ENCODE measurements at regions of chr13 and their contacts with region 1.

Region 1: DNA sequence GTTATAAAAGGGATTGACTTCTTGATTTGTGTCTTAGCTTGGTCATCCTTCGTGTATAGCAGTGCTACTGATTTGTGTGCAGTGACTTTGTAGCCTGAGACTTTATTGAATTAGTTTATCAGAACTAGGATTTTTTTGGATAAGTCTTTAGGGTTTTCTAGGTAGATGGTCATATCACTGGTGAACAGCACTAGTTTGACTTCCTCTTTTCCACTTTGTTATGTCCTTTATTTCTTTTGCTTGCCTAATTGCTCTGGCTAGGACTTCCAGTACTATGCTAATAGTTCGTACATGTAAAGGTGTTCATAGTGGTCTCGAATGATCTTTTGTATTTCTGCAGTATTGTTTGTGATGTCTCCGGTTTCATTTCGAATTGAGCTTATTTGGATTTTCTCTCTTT is 145.4 kb downstream of the DNAJC3 start:
- DNase-seq: no peak
- ATAC-seq: no peak
- H3K4me3 ChIP-seq: no peak overlapping the region
- H3K27ac ChIP-seq: no peak overlapping the region
- H3K4me1 ChIP-seq: no peaks in the 10 kb centered on the region
- H3K27me3 ChIP-seq: no peaks in the 10 kb centered on the region
- CTCF ChIP-seq: no peak
- POLR2A ChIP-seq: no peak

Region 2: GRCh38 chr13:95579303-95579702 is 243.0 kb before region 1 on chr13:
- intact Hi-C with region 1: no loop called
- DNase-seq: no peak
- ATAC-seq: no peak
- H3K4me3 ChIP-seq: no peak overlapping the region
- H3K27ac ChIP-seq: no peak overlapping the region
- H3K4me1 ChIP-seq: no peaks in the 10 kb centered on the region
- H3K27me3 ChIP-seq: no peaks in the 10 kb centered on the region
- CTCF ChIP-seq: no peak
- POLR2A ChIP-seq: no peak

Region 3: DNA sequence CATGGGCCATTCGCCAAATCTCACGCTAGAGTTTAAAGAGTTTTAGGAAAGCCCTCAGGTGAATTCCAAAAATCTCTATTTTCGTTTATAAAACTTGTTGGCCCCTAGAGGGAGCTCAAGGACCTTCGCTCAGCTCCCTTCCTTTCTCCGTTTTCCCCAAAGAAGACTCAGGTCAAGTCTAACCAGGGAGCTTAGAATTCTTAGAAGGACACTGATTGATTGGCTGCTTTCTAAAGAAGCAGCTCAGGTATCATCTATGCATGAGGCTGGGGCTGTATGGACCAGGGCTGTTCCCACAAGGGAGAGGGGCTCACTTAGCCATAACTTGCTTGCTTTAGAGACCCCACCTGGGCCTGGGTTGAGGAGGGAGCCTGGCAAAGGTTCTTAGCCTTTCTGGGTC is 198.3 kb before region 1 on chr13:
- intact Hi-C with region 1: loop called in 1 of 2 experiments (anchors 10 kb)
- DNase-seq: no peak
- ATAC-seq: peak; percentile 79 to 86 (median 83)
- H3K4me3 ChIP-seq: no peak overlapping the region
- H3K27ac ChIP-seq: no peak overlapping the region
- H3K4me1 ChIP-seq: no peaks in the 10 kb centered on the region
- H3K27me3 ChIP-seq: no peaks in the 10 kb centered on the region
- CTCF ChIP-seq: peak; percentile 60 to 72 (median 70)
- POLR2A ChIP-seq: no peak

Region 4: DNA sequence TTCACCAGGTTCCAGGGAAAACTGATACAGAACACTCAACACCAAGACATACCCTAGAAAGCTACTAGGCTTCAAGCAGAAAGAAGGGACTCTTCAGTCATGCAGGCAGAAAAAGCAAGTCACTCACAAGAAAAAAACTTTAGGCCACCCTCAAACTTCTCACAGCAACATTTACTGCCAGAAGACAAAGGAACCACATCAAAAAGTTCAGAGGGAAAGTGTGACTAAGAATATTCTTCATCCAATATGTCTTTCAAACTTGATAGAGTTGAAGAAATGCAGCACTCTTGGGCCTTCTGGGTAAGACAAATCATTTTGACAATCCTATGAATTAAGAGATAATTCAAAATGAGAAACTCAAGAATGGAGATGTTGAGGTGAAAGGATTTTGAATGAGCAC is 185.4 kb before region 1 on chr13:
- intact Hi-C with region 1: no loop called
- DNase-seq: no peak
- ATAC-seq: no peak
- H3K4me3 ChIP-seq: no peak overlapping the region
- H3K27ac ChIP-seq: no peak overlapping the region
- H3K4me1 ChIP-seq: no peaks in the 10 kb centered on the region
- H3K27me3 ChIP-seq: no peaks in the 10 kb centered on the region
- CTCF ChIP-seq: no peak
- POLR2A ChIP-seq: no peak

Region 5: DNA sequence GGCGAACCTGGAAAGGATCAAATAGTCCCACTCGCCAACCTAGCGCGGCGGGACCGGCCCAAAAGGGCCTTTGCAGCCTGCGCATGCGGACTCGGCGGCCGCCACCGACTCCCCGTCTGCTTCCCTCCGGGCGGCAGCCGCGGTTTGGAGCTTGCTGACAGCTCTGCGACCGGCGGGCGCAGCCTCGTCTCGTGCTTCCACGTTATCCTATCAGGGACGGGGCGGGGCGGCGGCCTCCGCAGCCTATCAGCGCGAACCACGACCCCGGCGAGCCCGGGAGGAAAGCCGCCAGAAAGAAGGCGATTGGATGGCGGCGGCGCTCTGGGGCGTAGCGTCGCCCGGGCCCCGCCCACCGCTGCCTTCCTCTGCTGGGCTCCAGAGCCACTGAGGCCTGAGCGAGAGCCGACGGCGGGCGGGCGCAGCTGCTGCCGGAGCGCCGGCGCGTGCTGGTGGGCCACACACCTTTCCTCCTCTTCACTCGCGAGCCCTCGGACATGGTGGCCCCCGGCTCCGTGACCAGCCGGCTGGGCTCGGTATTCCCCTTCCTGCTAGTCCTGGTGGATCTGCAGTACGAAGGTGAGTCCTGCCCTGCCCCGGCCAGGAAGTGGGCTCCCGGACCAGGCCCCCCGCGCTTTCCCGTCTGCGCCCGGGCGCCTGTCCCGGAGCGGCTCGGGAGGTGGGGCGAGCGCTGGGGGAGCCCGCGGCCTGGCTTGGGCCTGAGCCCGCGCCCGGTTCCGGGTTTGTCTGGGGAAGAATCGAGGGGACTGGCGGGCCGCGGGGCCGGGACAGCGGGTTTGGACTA is 145.3 kb before region 1 on chr13 and contains the start of gene DNAJC3:
- intact Hi-C with region 1: no loop called
- DNase-seq: peak; percentile 99 to 100 (median 99)
- ATAC-seq: peak; percentile 93 to 98 (median 95)
- H3K4me3 ChIP-seq: peak within 1 kb of the TSS; percentile 84 to 85 (median 85)
- H3K27ac ChIP-seq: peak within 1 kb of the TSS; percentile 91 to 94 (median 92)
- H3K4me1 ChIP-seq: peaks cover 0 to 47% (median 10%) of the 10 kb centered on the region in 4 donors
- H3K27me3 ChIP-seq: no peaks in the 10 kb centered on the region
- CTCF ChIP-seq: no peak
- POLR2A ChIP-seq: peak; percentile 100
- total RNA-seq, gene DNAJC3: 49.0 to 64.3 (median 51.7) TPM

Region 6: DNA sequence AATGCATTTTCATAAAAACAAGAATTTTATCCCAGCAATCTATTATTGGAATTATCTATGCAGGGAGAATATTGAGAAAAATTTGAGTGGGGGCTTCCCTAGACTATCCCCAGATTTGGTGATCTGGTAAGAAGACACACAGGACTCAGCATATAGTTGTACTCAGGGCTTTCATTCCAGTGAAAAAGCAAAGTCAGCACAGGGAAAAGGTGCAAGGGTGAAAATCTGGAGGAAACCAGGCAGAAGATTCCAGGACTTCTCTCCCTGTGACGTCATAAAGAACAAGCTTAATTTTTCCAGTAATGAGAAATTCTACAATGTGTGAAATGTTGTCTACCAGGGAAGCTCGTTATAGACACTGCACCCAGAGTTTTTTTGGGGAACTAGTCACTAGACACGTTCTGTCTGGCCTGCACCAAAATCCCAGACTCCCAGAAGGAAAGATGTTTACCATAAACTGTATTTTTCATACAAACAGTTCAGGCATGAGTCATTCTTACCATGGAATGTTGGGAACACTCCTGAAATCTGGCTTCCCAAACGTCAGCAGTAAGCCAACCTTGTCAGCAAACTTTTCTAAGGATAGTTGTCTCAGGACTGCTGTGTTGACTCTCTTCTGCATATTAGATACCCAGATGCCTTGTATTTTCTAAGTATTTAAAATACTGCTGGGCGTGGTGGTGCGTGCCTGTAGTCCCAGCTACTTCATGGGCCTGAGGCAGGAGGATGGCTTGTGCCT is 38.0 kb before region 1 on chr13:
- intact Hi-C with region 1: no loop called
- DNase-seq: no peak
- ATAC-seq: peak in 1 of 4 donors; percentile 25
- H3K4me3 ChIP-seq: no peak overlapping the region
- H3K27ac ChIP-seq: no peak overlapping the region
- H3K4me1 ChIP-seq: no peaks in the 10 kb centered on the region
- H3K27me3 ChIP-seq: no peaks in the 10 kb centered on the region
- CTCF ChIP-seq: no peak
- POLR2A ChIP-seq: no peak

Measured in right lobe of liver (tissue), 6 donors.